Caco-2 (cell line): ENCODE measurements at regions of chr19 and their contacts with region 1.

Region 1: GRCh38 chr19:45038931-45039893 is at the start of gene CLASRP:
- DNase-seq: peak; percentile 91 to 94
- H3K4me3 ChIP-seq: peak within 1 kb of the TSS; percentile 55
- H3K4me3 Mint-ChIP-seq: peak within 1 kb of the TSS; percentile 87
- H3K27ac Mint-ChIP-seq: peak within 1 kb of the TSS; percentile 77
- H3K4me1 ChIP-seq: peaks cover 9% of the 10 kb centered on the region; the same call in 1 of the 2 replicates
- H3K4me1 Mint-ChIP-seq: peaks cover 9% of the 10 kb centered on the region
- H3K27me3 ChIP-seq: no peaks in the 10 kb centered on the region
- H3K27me3 Mint-ChIP-seq: no peaks in the 10 kb centered on the region
- CTCF ChIP-seq: no peak
- total RNA-seq, gene CLASRP: 104 and 111 TPM in 2 replicates

Region 2: DNA sequence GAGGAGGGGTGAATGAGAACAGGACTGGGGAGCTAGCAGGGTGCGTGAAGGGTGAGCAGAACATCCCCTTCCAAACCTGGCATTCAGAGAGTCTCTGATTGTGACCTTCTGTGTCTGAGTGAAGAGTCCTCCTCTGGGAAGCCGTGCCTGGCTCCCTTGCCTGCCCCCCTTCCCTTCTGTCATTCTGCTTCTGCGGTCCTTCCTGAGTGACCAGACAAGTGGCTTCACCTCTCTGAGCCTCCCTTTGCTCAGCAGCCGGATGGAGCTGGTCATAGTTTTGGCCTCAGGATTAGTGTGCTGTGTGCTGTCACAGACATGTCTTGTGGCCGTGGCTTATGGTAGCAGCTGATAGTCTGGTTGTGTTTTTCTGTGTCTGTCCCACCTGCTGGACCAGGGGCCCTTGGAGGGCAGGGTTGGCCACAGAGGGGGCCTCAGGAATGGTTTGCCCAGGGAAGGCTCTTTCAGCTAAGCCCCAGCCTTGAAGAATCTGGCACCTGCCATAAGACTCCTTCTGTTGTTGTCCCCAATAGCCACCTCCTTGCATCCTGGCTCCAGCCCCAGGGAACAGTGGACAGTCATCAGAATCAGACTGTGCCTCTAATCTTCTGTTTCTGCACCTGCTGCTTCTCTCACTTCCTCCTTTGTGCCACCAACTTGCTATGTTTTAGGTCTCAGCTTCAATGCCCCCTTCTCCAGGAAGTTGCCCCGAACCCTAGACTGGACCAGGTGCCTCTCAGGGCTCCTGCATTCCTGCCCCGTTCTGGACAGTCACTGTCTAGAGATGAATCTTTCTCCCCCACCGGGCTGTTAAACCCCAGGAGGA is 78.1 kb before region 1 on chr19:
- CTCF ChIA-PET with region 1: no interaction called
- POLR2A ChIA-PET with region 1: no interaction called
- intact Hi-C with region 1: no loop called
- DNase-seq: no peak
- H3K4me3 ChIP-seq: no peak overlapping the region
- H3K4me3 Mint-ChIP-seq: no peak overlapping the region
- H3K27ac Mint-ChIP-seq: no peak overlapping the region
- H3K4me1 ChIP-seq: peaks cover 6% of the 10 kb centered on the region
- H3K4me1 Mint-ChIP-seq: peaks cover 10% of the 10 kb centered on the region
- H3K27me3 ChIP-seq: no peaks in the 10 kb centered on the region
- H3K27me3 Mint-ChIP-seq: no peaks in the 10 kb centered on the region
- CTCF ChIP-seq: no peak

Region 3: GRCh38 chr19:44988896-44989556 is 50.2 kb before region 1 on chr19:
- CTCF ChIA-PET with region 1: interaction called, 3 read pairs
- POLR2A ChIA-PET with region 1: interaction called, 11 read pairs
- intact Hi-C with region 1: no loop called
- DNase-seq: peak in 1 of 2 experiments; percentile 70
- H3K4me3 ChIP-seq: no peak overlapping the region
- H3K4me3 Mint-ChIP-seq: no peak overlapping the region
- H3K27ac Mint-ChIP-seq: no peak overlapping the region
- H3K4me1 ChIP-seq: no peaks in the 10 kb centered on the region
- H3K4me1 Mint-ChIP-seq: no peaks in the 10 kb centered on the region
- H3K27me3 ChIP-seq: no peaks in the 10 kb centered on the region
- H3K27me3 Mint-ChIP-seq: no peaks in the 10 kb centered on the region
- CTCF ChIP-seq: peak; percentile 59 to 74

Region 4: GRCh38 chr19:45001087-45001739 is 38.0 kb before region 1 on chr19 and contains the start of gene RELB:
- CTCF ChIA-PET with region 1: interaction called, 6 read pairs
- POLR2A ChIA-PET with region 1: interaction called, 5 read pairs
- intact Hi-C with region 1: loop called (anchors 2 kb)
- DNase-seq: peak; percentile 94 to 99
- H3K4me3 ChIP-seq: peak within 1 kb of the TSS; percentile 91
- H3K4me3 Mint-ChIP-seq: peak within 1 kb of the TSS; percentile 94
- H3K27ac Mint-ChIP-seq: peak within 1 kb of the TSS; percentile 89
- H3K4me1 ChIP-seq: peaks cover 10% of the 10 kb centered on the region
- H3K4me1 Mint-ChIP-seq: peaks cover 8% of the 10 kb centered on the region
- H3K27me3 ChIP-seq: no peaks in the 10 kb centered on the region
- H3K27me3 Mint-ChIP-seq: no peaks in the 10 kb centered on the region
- CTCF ChIP-seq: no peak
- total RNA-seq, gene RELB: 6.3 and 10.2 TPM in 2 replicates

Region 5: GRCh38 chr19:45069056-45069455 is 29.8 kb after region 1 on chr19:
- CTCF ChIA-PET with region 1: no interaction called
- POLR2A ChIA-PET with region 1: no interaction called
- intact Hi-C with region 1: no loop called
- DNase-seq: no peak
- H3K4me3 ChIP-seq: no peak overlapping the region
- H3K4me3 Mint-ChIP-seq: no peak overlapping the region
- H3K27ac Mint-ChIP-seq: no peak overlapping the region
- H3K4me1 ChIP-seq: no peaks in the 10 kb centered on the region
- H3K4me1 Mint-ChIP-seq: no peaks in the 10 kb centered on the region
- H3K27me3 ChIP-seq: no peaks in the 10 kb centered on the region
- H3K27me3 Mint-ChIP-seq: no peaks in the 10 kb centered on the region
- CTCF ChIP-seq: no peak